Mucosa of descending colon (tissue), 3 donors: ENCODE measurements at regions of chr15 and their contacts with region 1.

Region 1: GRCh38 chr15:89781891-89782618 is 5.9 kb downstream of the MESP2 start:
- DNase-seq: peak in 2 of 3 donors; percentile 23 to 33
- ATAC-seq: no peak
- H3K4me3 ChIP-seq: no peak overlapping the region
- H3K4me1 ChIP-seq: peaks cover 39% of the 10 kb centered on the region
- CTCF ChIP-seq: no peak

Region 2: GRCh38 chr15:89851673-89852341 is 69.8 kb after region 1 on chr15:
- intact Hi-C with region 1: loop called in 1 of 2 experiments (anchors 10 kb)
- DNase-seq: no peak
- ATAC-seq: peak; percentile 58
- H3K4me3 ChIP-seq: peak overlapping the region; percentile 0
- H3K4me1 ChIP-seq: peaks cover 29% of the 10 kb centered on the region
- CTCF ChIP-seq: no peak